Breast epithelium (tissue), 4 donors: ENCODE measurements at regions of chr5 and their contacts with region 1.

Region 1: DNA sequence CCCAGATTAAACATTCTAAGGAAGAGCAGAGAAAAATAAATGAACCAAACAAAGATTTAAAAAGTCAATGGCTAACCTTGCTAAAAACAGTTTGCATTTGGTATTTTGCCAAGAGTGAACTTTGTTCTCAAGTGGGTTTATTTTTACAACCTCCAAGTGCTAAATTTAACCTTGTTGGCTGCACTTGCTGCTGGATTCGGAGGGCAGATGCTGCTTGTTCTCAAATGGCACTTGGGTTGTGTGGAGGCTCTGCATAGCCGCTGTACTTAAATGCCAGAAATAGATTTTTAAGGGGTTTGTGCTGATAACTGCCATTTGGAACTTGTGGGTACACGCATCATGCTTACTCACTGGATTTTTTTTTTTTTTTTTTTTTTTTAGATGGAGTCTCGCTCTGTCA is 13.3 kb upstream of the SPATA24 start:
- DNase-seq: no peak
- H3K4me3 ChIP-seq: no peak overlapping the region
- H3K27ac ChIP-seq: no peak overlapping the region
- H3K4me1 ChIP-seq: peaks cover 4 to 12% of the 10 kb centered on the region in 2 donors
- H3K27me3 ChIP-seq: no peaks in the 10 kb centered on the region
- CTCF ChIP-seq: no peak
- POLR2A ChIP-seq: no peak

Region 2: GRCh38 chr5:139486201-139486600 is 69.0 kb after region 1 on chr5:
- intact Hi-C with region 1: loop called (anchors 2 kb)
- DNase-seq: no peak
- H3K4me3 ChIP-seq: no peak overlapping the region
- H3K27ac ChIP-seq: no peak overlapping the region
- H3K4me1 ChIP-seq: peaks cover 4 to 15% of the 10 kb centered on the region in 2 donors
- H3K27me3 ChIP-seq: no peaks in the 10 kb centered on the region
- CTCF ChIP-seq: no peak
- POLR2A ChIP-seq: no peak

Region 3: GRCh38 chr5:139517683-139518564 is 100.7 kb after region 1 on chr5:
- intact Hi-C with region 1: loop called (anchors 5 kb)
- DNase-seq: peak; percentile 87 to 92
- H3K4me3 ChIP-seq: peak overlapping the region; percentile 43 to 73 (median 54)
- H3K27ac ChIP-seq: peak overlapping the region; percentile 89 to 92
- H3K4me1 ChIP-seq: no peaks in the 10 kb centered on the region
- H3K27me3 ChIP-seq: no peaks in the 10 kb centered on the region
- CTCF ChIP-seq: peak; percentile 95 to 98 (median 97)
- POLR2A ChIP-seq: peak; percentile 45